Left cardiac atrium (tissue), 4 donors: ENCODE measurements at regions of chr2 and their contacts with region 1.

Region 1: GRCh38 chr2:99180755-99181623 is at the starts of genes MITD1 and MRPL30:
- DNase-seq: peak; percentile 92
- ATAC-seq: peak; percentile 99
- total RNA-seq, gene MITD1: 16.2 to 17.6 TPM
- total RNA-seq, gene MRPL30: 25.4 to 25.8 TPM

Region 2: DNA sequence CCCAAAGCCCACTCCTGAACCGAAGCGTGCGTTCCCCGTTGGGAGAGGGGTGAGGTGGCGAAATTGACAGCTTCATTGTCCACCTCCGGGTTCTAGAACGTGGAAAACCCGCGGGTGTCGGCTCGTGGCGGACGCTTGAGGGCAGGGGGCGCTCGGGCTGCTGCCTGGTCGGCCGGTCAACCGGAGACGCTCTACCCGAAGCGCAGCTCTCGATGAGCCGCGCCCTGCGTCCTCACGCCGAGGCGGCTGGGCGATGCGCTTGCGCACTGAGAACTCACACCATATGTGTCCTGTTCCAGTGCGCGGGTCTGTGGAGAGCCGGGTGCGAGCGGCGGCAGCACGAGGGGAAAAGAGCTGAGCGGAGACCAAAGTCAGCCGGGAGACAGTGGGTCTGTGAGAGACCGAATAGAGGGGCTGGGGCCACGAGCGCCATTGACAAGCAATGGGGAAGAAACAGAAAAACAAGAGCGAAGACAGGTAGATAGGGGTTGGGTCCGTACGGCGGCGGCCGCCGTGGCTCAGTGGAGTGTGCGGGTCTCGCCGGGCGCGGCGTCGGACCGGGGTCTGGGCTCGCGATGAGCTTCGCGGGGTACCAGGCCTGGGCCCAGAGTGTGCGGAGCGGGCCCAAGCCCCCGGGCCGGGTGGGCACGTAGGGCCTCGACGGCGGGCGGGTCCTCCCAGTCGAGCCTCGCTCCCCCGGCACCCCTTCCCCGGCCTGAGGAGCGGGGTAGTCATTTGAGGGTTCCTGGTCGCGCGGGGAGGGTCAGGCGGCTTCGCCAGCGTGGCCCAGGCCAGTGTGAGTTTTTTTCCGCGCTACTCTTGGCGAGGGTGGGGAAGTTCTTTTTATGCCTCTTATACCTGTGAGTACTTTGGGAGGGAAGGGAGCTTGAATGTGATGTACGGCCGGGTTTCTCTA is 156.4 kb after region 1 on chr2 and contains the start of gene EIF5B:
- intact Hi-C with region 1: loop called in 1 of 2 experiments (anchors 5 kb)
- DNase-seq: peak; percentile 98
- ATAC-seq: peak; percentile 94 to 95
- total RNA-seq, gene EIF5B: 51.7 to 66.9 TPM